SK-N-SH (cell line): ENCODE measurements at regions of chr1 and their contacts with region 1.

Region 1: GRCh38 chr1:179025975-179026812 is 500 bp downstream of the FAM20B start:
- DNase-seq: peak; percentile 93
- H3K4me3 ChIP-seq: peak overlapping the region; percentile 65 to 96
- H3K27ac ChIP-seq: peak overlapping the region; percentile 89 to 96
- H3K4me1 ChIP-seq: peaks cover 10 to 23% of the 10 kb centered on the region in 2 experiments; a peak in 3 of 4 replicates
- H3K27me3 ChIP-seq: no peaks in the 10 kb centered on the region
- CTCF ChIP-seq: no peak
- EP300 ChIP-seq: no peak
- RAD21 ChIP-seq: no peak

Region 2: GRCh38 chr1:178976541-178976940 is 49.7 kb before region 1 on chr1:
- CTCF ChIA-PET with region 1: no interaction called
- POLR2A ChIA-PET with region 1: no interaction called
- DNase-seq: no peak
- H3K4me3 ChIP-seq: no peak overlapping the region
- H3K27ac ChIP-seq: no peak overlapping the region
- H3K4me1 ChIP-seq: no peaks in the 10 kb centered on the region
- H3K27me3 ChIP-seq: no peaks in the 10 kb centered on the region
- CTCF ChIP-seq: no peak
- EP300 ChIP-seq: no peak
- RAD21 ChIP-seq: no peak

Region 3: DNA sequence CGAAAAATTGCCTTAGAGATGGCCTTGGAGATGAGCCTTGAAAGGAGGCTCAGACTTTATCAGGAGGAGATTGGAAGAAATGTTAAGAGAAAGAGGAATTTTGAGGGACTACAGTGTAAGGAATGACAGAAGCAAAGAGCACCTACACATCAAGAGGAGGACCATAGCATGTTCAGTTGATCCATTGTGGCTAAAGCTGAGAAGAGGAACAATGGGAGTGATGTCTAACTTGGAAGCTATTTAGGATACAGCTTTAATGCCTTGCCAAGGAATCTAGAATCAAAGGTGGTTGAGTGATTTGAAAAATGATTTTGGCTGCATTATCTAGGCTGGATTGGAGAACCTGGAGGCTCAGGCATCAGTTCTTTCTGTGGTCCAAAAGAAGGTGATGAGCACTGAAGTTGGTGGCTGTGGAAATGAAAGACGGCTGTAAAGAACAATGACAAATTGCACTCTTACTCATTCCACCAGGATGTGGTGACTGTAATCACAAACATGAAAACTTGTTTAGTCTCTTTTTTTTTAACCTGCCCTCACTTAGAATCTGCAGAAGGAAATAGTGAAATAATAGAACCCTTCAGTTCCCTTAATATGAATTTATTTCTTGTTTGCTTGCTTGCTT is 10.8 kb after region 1 on chr1:
- CTCF ChIA-PET with region 1: interaction called, 11 read pairs
- POLR2A ChIA-PET with region 1: no interaction called
- DNase-seq: no peak
- H3K4me3 ChIP-seq: no peak overlapping the region
- H3K27ac ChIP-seq: peak overlapping the region in 1 of 2 experiments; percentile 51; a peak in 1 of 4 replicates
- H3K4me1 ChIP-seq: peaks cover 2 to 31% of the 10 kb centered on the region in 2 experiments; a peak in 3 of 4 replicates
- H3K27me3 ChIP-seq: no peaks in the 10 kb centered on the region
- CTCF ChIP-seq: no peak
- EP300 ChIP-seq: no peak
- RAD21 ChIP-seq: no peak